Pancreas (tissue), 10 donors: ENCODE measurements at regions of chr10 and their contacts with region 1.

Region 1: DNA sequence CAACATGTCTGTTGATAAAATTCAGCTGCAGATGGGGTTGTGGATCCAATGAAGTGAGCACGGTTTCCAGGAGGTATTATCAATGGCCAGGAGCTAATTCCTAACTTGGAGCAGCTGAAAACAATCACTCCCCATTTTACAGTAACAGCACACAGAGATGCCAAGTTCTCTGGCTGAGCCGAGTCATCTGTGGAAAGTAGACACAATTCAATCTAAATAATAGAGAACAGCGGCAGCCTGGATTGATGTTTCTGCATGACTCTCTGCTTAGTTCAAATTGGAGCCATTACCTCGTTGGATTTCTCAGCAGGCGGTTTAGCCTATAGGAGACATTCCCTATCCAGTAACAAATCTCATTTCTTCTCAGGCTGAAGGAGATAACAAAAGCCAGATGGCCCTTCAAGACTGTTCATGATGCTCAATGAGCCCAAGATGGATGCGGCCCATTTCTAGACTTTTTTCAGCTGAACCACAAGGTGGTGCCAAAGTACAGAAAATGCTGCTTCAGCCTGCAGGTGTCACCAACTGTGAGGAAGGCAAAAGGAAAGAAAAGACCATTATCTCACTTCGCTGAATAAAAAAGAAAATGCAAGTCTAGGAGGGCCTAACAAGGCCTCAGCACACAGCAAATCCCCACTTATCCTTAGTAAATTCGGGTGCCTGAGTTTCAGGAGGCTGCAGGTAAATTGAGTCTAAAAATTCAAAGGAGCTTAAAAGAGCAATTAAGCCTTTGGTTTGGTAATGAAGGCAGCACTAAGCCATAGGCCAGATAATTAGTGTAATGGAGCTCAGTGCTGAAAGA is 83.7 kb downstream of the SLC16A9 start:
- DNase-seq: peak in 3 of 6 donors; percentile 32 to 55 (median 33)
- ATAC-seq: peak; percentile 82 to 93 (median 91)
- H3K4me3 ChIP-seq: no peak overlapping the region
- H3K27ac ChIP-seq: no peak overlapping the region
- H3K4me1 ChIP-seq: peaks cover 0 to 3% (median 0%) of the 10 kb centered on the region in 3 donors
- H3K27me3 ChIP-seq: no peaks in the 10 kb centered on the region
- CTCF ChIP-seq: peak; percentile 44 to 72 (median 59)

Region 2: GRCh38 chr10:59366290-59366689 is 259.6 kb before region 1 on chr10:
- intact Hi-C with region 1: no loop called
- DNase-seq: no peak
- ATAC-seq: no peak
- H3K4me3 ChIP-seq: no peak overlapping the region
- H3K27ac ChIP-seq: no peak overlapping the region
- H3K4me1 ChIP-seq: peaks cover 0 to 7% (median 0%) of the 10 kb centered on the region in 3 donors
- H3K27me3 ChIP-seq: no peaks in the 10 kb centered on the region
- CTCF ChIP-seq: no peak

Region 3: DNA sequence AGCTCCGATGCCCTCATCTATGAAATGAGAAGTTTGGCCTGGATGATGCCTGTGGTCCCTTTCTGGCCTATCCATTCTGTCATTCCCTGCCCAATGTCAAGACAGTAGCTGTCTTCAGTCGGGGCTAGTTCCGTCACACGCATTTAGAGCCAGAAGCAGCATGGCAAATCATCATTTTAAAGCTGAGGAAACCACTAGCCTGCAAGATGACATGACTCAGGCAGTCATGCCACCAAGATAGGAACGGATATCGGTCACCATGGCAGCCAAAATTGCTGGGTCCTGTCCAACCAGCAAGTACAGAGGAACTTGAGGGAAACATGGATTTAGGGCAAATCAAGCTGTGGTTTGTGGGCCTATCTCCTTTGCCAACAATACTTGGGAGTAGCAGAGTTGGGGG is 191.9 kb after region 1 on chr10:
- intact Hi-C with region 1: loop called in 1 of 3 experiments (anchors 5 kb)
- DNase-seq: no peak
- ATAC-seq: peak in 2 of 4 donors; percentile 23 to 50
- H3K4me3 ChIP-seq: no peak overlapping the region
- H3K27ac ChIP-seq: no peak overlapping the region
- H3K4me1 ChIP-seq: no peaks in the 10 kb centered on the region
- H3K27me3 ChIP-seq: no peaks in the 10 kb centered on the region
- CTCF ChIP-seq: no peak

Region 4: DNA sequence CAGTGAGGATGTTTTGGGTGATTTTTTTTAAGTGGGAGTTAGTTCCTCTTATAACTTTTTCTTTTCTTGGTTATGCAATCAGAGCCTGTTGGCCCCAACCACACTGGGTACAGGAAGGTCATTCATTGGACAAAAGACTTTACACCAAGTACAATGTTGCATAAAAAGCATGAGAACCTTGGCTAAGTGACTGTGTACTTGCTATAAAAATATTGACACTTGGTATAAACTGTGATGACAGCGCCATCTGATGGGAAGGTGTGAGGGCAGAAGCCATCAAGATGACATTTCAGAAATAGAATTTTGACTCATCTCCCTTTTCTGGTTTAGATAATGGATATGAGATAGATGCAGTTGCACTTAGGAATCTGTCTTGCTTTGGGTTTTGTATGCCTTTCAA is 406.8 kb after region 1 on chr10:
- intact Hi-C with region 1: loop called in 2 of 3 experiments (anchors 10 kb)
- DNase-seq: peak in 3 of 6 donors; percentile 45 to 58 (median 52)
- ATAC-seq: peak; percentile 93 to 95 (median 94)
- H3K4me3 ChIP-seq: no peak overlapping the region
- H3K27ac ChIP-seq: no peak overlapping the region
- H3K4me1 ChIP-seq: peaks cover 0 to 6% (median 0%) of the 10 kb centered on the region in 3 donors
- H3K27me3 ChIP-seq: no peaks in the 10 kb centered on the region
- CTCF ChIP-seq: peak in 3 of 4 donors; percentile 20 to 38 (median 31)

Region 5: DNA sequence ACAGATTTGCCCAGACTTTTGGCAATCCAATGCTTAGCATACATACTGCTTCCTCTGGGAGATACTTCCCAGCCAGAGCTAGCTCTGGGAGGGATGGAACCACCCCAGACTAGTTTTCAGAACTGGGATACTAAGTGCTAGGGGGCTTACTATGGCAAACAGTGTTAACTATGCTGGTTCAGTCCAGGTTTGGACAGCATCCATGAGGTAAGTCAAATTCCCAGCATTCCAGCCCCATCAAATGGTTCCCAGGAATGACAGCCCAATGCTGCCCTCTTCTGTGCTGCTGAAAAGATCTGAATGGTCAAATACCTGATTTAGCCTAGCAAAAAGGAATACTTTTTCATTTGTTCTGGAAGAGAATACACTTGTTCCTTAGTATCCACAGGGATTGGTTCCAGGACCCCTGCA is 422.2 kb after region 1 on chr10:
- intact Hi-C with region 1: loop called in 1 of 3 experiments (anchors 5 kb)
- DNase-seq: peak in 2 of 6 donors; percentile 19 to 26
- ATAC-seq: peak in 3 of 4 donors; percentile 63 to 88 (median 79)
- H3K4me3 ChIP-seq: no peak overlapping the region
- H3K27ac ChIP-seq: no peak overlapping the region
- H3K4me1 ChIP-seq: peaks cover 7 to 8% (median 8%) of the 10 kb centered on the region in 3 donors
- H3K27me3 ChIP-seq: no peaks in the 10 kb centered on the region
- CTCF ChIP-seq: no peak